WTC11 (cell line): ENCODE measurements at regions of chr1 and their contacts with region 1.

Region 1: DNA sequence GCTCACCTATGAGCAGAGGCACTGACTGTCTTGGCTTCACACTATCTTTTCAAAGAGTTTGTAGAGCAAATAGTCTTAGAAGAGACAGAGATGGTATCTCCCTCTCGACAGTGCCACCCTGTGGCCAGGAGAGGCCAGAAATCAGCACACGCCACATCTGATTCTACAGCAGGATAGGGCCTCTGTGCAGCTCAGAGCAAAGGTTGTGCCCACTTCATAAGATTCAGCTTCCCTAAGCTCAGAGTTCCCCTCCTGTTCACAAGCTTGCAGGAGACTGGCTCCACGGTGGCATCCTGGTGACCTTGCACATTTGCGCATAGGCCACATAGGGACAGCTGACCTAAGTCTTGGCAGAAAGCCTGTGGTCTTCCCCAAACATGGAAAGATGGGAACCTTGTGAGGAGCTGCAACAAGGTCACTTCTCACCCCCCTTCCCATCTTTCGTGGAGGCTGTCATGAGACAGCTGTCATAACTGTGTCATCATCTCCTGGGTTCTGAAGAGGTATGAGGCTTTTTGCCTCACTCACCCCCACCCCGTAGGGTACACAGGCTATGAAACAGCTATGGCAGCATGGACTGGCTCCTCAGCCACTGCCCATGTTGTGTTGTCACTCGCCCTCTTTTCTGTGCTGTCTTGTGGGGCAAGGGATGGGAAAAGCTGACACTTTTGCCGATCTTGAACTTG is 3.0 kb downstream of the ITLN2 start:
- DNase-seq: peak; percentile 71
- ATAC-seq: peak; percentile 60
- H3K4me3 Mint-ChIP-seq: no peak overlapping the region
- H3K27ac Mint-ChIP-seq: no peak overlapping the region
- H3K4me1 Mint-ChIP-seq: peaks cover 38% of the 10 kb centered on the region
- H3K27me3 Mint-ChIP-seq: no peaks in the 10 kb centered on the region
- CTCF ChIP-seq: peak; percentile 58

Region 2: GRCh38 chr1:160726498-160727315 is 224.9 kb before region 1 on chr1:
- CTCF ChIA-PET with region 1: interaction called, 28 read pairs
- POLR2A ChIA-PET with region 1: no interaction called
- DNase-seq: peak; percentile 69
- ATAC-seq: peak; percentile 86
- H3K4me3 Mint-ChIP-seq: no peak overlapping the region
- H3K27ac Mint-ChIP-seq: no peak overlapping the region
- H3K4me1 Mint-ChIP-seq: peaks cover 23% of the 10 kb centered on the region
- H3K27me3 Mint-ChIP-seq: no peaks in the 10 kb centered on the region; the same call in 1 of the 2 replicates
- CTCF ChIP-seq: peak; percentile 78

Region 3: GRCh38 chr1:160821628-160822027 is 130.0 kb before region 1 on chr1:
- CTCF ChIA-PET with region 1: interaction called, 12 read pairs
- POLR2A ChIA-PET with region 1: no interaction called
- DNase-seq: peak; percentile 61
- ATAC-seq: peak; percentile 80
- H3K4me3 Mint-ChIP-seq: no peak overlapping the region
- H3K27ac Mint-ChIP-seq: no peak overlapping the region
- H3K4me1 Mint-ChIP-seq: peaks cover 12% of the 10 kb centered on the region
- H3K27me3 Mint-ChIP-seq: no peaks in the 10 kb centered on the region
- CTCF ChIP-seq: peak; percentile 14; the same call in 1 of the 2 replicates

Region 4: DNA sequence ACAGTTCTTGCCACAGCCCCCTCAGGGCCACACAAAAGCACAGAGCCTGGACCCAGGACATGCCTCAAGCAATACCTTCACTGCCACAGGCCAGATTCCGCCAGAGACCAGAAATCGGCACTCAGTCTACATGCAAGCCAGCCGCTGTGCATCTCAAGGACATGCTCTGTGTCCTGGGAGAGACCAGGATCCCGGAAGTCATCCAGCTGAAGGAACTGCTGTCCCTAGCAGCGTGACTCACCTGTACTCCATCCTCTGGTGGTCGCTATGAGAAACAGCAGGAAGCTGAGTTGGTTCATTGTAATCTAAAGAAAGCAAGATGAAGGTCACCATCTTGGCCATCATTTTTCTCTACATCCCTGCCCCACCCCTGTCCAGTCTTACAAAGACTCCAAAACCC is 67.0 kb before region 1 on chr1:
- CTCF ChIA-PET with region 1: interaction called, 20 read pairs
- POLR2A ChIA-PET with region 1: no interaction called
- DNase-seq: no peak
- ATAC-seq: peak; percentile 95
- H3K4me3 Mint-ChIP-seq: no peak overlapping the region
- H3K27ac Mint-ChIP-seq: no peak overlapping the region
- H3K4me1 Mint-ChIP-seq: 0 out of 2 replicates have a peak, but pooled peaks cover 2% of the 10 kb centered on the region
- H3K27me3 Mint-ChIP-seq: no peaks in the 10 kb centered on the region; the same call in 1 of the 2 replicates
- CTCF ChIP-seq: no peak

Region 5: GRCh38 chr1:160978510-160978927 is 26.9 kb after region 1 on chr1:
- CTCF ChIA-PET with region 1: interaction called, 47 read pairs
- POLR2A ChIA-PET with region 1: no interaction called
- DNase-seq: no peak
- ATAC-seq: no peak
- H3K4me3 Mint-ChIP-seq: no peak overlapping the region
- H3K27ac Mint-ChIP-seq: no peak overlapping the region
- H3K4me1 Mint-ChIP-seq: peaks cover 42% of the 10 kb centered on the region
- H3K27me3 Mint-ChIP-seq: no peaks in the 10 kb centered on the region
- CTCF ChIP-seq: no peak

Region 6: DNA sequence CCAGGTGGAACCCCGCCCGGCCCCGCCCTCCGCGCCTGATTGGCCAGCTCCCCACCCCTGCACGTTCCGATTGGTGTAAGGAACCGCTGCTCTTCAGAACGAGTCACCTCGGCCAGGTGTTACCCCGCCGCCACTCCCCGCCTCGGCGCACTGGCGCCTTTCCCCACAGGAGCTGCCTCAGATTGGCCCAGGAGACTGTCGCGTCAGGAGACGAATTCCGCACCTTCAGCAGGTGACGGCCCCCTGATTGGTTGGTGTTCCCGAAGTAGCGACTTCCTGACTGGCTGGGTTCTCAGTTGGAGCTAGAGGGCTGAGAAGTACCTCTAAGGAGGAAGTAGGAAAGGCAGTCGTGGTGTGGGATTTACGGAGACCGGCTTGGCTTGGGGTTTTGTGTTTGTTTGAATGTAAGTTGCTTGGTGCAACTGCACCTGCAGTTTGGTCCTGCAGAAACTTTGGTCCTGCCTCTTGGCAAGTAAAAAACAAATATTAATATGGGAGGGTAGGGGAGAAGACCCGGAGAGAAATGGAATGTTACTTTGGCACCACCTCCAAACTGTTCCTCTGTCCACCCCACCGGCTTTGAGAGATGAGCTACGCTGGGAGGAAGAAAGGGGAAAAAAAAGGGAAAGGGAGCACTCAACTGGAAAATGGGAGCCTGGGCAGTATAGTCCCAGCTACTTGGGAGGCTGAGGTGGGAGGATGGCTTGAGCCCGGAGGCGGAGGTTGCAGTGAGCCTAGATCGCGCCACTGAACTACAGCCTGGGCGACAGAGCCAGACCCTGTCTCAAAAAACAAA is 69.8 kb after region 1 on chr1:
- CTCF ChIA-PET with region 1: interaction called, 18 read pairs
- POLR2A ChIA-PET with region 1: interaction called, 3 read pairs
- DNase-seq: peak; percentile 99
- ATAC-seq: peak; percentile 96
- H3K4me3 Mint-ChIP-seq: peak overlapping the region; percentile 87
- H3K27ac Mint-ChIP-seq: peak overlapping the region; percentile 100
- H3K4me1 Mint-ChIP-seq: peaks cover 50% of the 10 kb centered on the region
- H3K27me3 Mint-ChIP-seq: no peaks in the 10 kb centered on the region
- CTCF ChIP-seq: no peak